ENCODE measurements at regions of chr4 and their contacts with region 1.

Region 1: DNA sequence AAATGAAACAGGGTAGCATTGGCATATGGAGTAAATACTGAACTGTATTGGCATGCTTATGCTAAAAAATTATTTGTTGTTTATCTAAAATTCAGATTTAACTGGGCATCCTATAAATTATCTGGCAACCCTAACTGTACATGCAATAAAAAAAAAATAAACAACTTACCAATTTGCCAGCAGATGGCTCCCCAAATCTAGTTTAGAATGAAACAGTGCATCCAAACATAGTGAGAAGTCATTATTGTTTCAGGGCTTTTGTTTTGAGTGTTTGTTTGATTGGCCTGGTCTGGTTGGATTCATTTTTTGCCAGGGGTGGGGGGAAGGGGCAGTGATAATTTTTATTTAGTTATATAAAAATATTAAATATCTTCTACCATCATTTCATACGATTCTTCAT is 12.8 kb upstream of the NSUN7 start:
- DNase-seq: peak; percentile 31
- ATAC-seq: peak; percentile 49
- H3K4me3 ChIP-seq: no peak overlapping the region
- H3K27ac ChIP-seq: no peak overlapping the region
- H3K4me1 ChIP-seq: no peaks in the 10 kb centered on the region
- H3K27me3 ChIP-seq: no peaks in the 10 kb centered on the region
- CTCF ChIP-seq: peak; percentile 22 to 70 (median 45); a peak in 4 of 6 replicates
- POLR2A ChIP-seq: no peak
- RAD21 ChIP-seq: peak; percentile 83

Region 2: DNA sequence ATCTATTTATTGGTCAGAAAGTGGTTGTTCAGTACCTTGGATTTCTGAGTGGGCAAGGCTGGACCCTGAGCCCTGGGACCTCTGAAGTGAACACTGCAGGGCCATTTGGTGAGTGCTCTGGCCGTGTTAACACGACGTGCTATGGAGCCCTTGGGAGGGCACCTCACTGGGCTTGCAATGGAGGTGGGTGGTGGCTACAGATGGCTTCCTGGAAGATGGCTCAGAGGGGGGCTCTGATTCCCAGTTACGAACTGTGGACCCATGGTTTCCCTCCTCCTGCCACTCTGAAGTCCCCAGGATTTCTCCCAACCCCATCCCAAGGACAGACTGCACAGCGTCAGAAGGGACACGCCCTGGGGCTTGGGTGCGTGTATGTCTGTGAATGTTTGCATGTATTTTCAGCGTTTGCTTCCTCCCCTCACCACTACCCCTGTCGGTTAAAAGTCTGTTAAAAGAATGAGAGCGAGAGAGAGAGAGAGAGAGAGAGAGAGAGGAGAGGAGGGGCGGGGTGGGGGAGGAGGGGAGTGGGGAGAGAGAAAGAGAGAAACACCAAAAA is 543.8 kb before region 1 on chr4:
- CTCF ChIA-PET with region 1: no interaction called
- POLR2A ChIA-PET with region 1: no interaction called
- RAD21 ChIA-PET with region 1: no interaction called
- intact Hi-C with region 1: no loop called
- DNase-seq: no peak
- ATAC-seq: no peak
- H3K4me3 ChIP-seq: no peak overlapping the region
- H3K27ac ChIP-seq: no peak overlapping the region
- H3K4me1 ChIP-seq: no peaks in the 10 kb centered on the region
- H3K27me3 ChIP-seq: no peaks in the 10 kb centered on the region
- CTCF ChIP-seq: no peak
- POLR2A ChIP-seq: no peak
- RAD21 ChIP-seq: no peak

Region 3: DNA sequence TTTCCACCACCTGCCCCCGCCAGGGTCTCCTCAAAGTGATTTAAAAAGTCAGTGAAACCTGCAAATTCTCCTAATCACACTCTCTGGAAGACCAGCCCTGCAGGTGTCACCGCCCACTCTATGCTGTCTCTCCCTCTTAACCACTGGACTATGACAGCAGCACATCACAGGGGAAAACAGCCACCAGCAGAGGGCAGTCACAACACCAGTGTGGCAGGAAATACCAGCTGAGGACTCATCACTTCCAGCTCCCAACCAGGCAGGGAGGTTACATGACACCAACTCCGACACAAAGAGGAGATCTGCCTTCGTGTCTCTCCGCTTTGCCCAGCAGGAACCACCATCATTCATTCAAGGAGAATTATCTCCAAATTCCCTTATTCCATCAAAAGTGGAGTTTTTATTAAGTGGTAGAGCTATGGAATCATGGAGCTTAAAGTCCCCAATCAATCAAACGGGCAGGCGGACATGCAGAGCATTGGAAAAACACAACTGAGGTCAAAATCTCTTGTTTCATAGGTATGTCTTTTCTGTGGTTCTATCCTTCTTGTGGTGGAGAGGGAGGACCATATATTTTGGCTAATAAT is 104.2 kb after region 1 on chr4:
- CTCF ChIA-PET with region 1: interaction called, 7 read pairs
- POLR2A ChIA-PET with region 1: no interaction called
- RAD21 ChIA-PET with region 1: no interaction called
- intact Hi-C with region 1: loop called (anchors 2 kb)
- DNase-seq: peak; percentile 71
- ATAC-seq: peak; percentile 98
- H3K4me3 ChIP-seq: no peak overlapping the region
- H3K27ac ChIP-seq: no peak overlapping the region
- H3K4me1 ChIP-seq: peaks cover 4 to 11% of the 10 kb centered on the region in 2 experiments; a peak in 3 of 4 replicates
- H3K27me3 ChIP-seq: no peaks in the 10 kb centered on the region
- CTCF ChIP-seq: peak; percentile 78 to 95 (median 94)
- POLR2A ChIP-seq: no peak
- RAD21 ChIP-seq: peak; percentile 59